ENCODE measurements at regions of chr17 and their contacts with region 1.

Region 1: DNA sequence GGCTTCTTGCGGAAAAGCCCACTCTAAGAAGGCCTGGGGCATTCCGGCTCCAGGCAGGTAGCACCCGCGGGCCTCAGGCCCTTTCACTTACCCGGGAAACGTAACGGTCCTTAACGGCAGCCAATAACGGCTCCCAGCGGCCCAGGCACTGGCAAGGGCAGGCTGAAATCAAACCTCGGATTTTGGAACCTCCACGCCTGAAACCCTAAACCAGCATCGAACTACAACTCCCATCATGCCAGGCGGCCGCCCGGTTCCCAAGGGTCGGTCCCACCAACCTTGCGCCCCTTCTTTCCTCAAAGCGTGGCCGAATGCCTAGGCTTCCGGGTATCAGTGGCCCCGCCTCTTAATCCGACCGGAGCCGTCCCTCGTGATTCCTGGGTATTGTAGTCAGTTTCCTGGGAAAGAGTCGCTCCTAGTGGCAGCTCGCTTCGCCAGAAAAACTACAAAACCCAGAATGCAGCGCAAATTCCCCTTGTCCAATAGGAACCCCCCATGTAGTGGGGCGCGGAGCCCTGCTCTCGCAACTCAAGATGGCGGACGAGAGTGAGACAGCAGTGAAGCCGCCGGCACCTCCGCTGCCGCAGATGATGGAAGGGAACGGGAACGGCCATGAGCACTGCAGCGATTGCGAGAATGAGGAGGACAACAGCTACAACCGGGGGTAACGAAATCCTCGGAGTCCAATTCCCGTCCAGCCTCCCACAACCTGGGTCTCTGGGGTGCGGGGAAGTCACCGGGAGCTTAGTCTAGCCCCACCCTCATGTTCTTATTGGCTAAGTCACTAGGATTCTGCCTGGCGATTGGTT is at the start of gene NMT1:
- DNase-seq: peak; percentile 88 to 99 (median 94)
- ATAC-seq: peak; percentile 90
- H3K4me3 ChIP-seq: peak within 1 kb of the TSS; percentile 84 to 88
- H3K4me3 Mint-ChIP-seq: peak within 1 kb of the TSS; percentile 97
- H3K27ac ChIP-seq: peak within 1 kb of the TSS; percentile 81 to 91
- H3K27ac Mint-ChIP-seq: peak within 1 kb of the TSS; percentile 99
- H3K4me1 ChIP-seq: peaks cover 32% of the 10 kb centered on the region
- H3K4me1 Mint-ChIP-seq: peaks cover 43% of the 10 kb centered on the region
- H3K27me3 ChIP-seq: no peaks in the 10 kb centered on the region
- H3K27me3 Mint-ChIP-seq: no peaks in the 10 kb centered on the region
- CTCF ChIP-seq: no peak
- total RNA-seq, gene NMT1: 62.6 to 66.6 TPM

Region 2: DNA sequence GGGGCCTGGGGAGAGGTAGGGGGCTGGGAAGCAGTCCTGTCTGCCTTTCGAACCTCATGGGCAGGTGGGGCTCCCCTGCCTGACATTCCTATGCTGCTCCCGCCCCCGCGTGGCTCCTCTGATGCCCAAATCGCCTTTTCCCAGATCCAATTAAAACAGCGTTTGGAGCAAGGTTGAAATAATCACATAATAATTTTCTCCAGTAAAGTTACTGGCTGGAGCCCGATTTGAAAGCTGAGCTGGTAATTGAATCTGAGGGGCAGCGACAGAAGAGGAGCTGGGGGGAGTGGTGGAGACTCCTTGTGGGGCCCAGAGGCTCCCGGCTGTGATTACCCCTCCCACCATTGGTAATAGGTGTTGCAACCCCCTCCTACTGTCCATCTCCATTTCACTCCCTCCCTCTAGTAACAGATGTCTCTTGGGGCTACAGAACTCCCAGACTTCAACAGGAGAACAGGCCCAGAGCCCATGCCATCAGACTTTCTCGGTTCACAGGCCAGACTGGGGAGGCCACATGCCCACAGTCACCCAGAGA is 54.0 kb before region 1 on chr17:
- CTCF ChIA-PET with region 1: no interaction called
- POLR2A ChIA-PET with region 1: no interaction called
- intact Hi-C with region 1: no loop called
- DNase-seq: no peak
- ATAC-seq: no peak
- H3K4me3 ChIP-seq: no peak overlapping the region
- H3K4me3 Mint-ChIP-seq: no peak overlapping the region
- H3K27ac ChIP-seq: no peak overlapping the region
- H3K27ac Mint-ChIP-seq: no peak overlapping the region
- H3K4me1 ChIP-seq: no peaks in the 10 kb centered on the region
- H3K4me1 Mint-ChIP-seq: no peaks in the 10 kb centered on the region
- H3K27me3 ChIP-seq: no peaks in the 10 kb centered on the region
- H3K27me3 Mint-ChIP-seq: peaks cover 6% of the 10 kb centered on the region
- CTCF ChIP-seq: no peak

Region 3: DNA sequence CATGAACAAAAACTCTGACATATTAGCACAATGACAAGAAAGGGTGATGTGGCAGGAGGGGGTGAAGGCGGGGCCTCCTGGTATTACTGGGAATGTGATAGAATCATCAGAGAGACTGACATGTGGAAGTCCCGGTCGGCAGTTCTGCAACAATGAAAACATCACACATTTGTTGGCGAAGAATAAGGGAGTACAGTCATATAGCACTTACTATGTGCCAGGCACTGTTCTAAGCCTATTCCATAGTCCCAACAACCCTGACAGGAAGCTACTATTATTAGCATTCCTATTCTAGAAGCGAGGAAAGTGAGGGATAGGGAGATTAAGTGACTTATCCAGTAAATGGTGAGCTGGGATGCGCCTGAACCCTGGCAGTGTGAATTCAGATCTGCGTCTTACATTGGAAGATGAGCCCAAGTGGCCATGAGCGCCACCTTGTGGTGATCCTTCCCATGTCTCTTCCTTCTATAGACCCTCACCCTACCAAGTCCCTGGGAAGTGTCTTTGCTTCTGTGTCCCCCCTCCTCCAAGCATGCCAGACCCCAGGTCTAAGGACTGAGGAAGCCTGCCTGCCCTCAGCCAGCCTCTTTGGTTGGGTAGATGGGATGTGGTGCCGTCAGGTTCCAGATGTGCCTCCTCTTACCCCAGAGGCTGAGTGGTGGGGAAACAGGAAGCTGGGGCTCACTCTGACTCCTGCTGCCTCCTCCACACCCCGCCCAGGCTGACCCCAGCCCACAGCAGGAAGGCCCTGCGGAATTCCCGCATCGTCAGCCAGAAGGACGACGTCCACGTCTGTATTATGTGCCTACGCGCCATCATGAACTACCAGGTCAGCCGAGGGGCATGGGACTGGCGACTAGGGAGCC is 174.6 kb after region 1 on chr17:
- CTCF ChIA-PET with region 1: no interaction called
- POLR2A ChIA-PET with region 1: no interaction called
- intact Hi-C with region 1: no loop called
- DNase-seq: peak; percentile 62 to 90 (median 83)
- ATAC-seq: peak; percentile 62
- H3K4me3 ChIP-seq: no peak overlapping the region
- H3K4me3 Mint-ChIP-seq: no peak overlapping the region
- H3K27ac ChIP-seq: peak overlapping the region in 1 of 2 experiments; percentile 60
- H3K27ac Mint-ChIP-seq: peak overlapping the region; percentile 66
- H3K4me1 ChIP-seq: peaks cover 45% of the 10 kb centered on the region
- H3K4me1 Mint-ChIP-seq: peaks cover 51% of the 10 kb centered on the region
- H3K27me3 ChIP-seq: no peaks in the 10 kb centered on the region
- H3K27me3 Mint-ChIP-seq: no peaks in the 10 kb centered on the region
- CTCF ChIP-seq: peak; percentile 71

Region 4: DNA sequence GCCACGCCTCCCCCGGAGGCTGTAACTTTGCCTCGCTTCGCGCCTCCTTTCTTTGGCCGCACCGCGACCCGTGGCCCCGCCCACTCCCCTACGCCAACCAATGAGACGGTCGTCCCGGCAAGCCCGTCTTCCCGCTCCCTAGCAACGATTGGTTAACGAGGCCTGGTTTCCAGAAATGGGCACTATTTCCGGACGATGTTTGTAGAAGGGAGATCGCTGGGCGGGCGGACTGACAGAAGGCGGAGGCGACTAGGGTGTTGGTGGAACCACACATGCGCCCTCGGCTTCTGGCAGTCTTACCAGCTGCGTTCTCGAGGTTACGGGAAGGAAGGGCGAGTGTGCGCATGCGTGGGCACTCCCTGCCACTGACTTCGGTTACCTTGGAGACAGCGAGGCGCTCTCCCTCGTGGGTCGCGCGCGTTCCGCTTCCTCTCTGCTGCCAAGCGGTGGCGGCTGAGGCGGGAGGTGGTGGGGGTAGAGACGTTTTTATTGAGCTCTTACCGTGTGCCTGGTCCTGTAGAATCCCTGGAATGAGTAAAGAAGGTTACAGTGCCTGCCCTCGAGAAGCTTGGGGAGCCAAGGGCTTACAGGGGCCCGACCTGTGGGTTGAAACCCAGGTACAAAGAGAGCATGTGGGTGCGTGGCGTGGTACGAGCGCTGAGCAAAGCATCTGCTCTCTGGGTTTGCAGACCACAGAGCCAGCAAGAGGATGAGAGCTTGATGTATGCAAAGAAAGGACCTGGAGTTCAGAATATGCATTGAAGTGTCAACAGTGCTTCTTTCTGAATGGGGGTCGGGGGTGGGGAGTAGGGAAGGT is 256.3 kb after region 1 on chr17:
- CTCF ChIA-PET with region 1: no interaction called
- POLR2A ChIA-PET with region 1: interaction called, 5 read pairs
- intact Hi-C with region 1: loop called in 1 of 2 experiments (anchors 5 kb)
- DNase-seq: peak; percentile 99 to 100 (median 100)
- ATAC-seq: peak; percentile 81
- H3K4me3 ChIP-seq: peak overlapping the region; percentile 55 to 81
- H3K4me3 Mint-ChIP-seq: peak overlapping the region; percentile 95
- H3K27ac ChIP-seq: peak overlapping the region; percentile 75 to 81
- H3K27ac Mint-ChIP-seq: peak overlapping the region; percentile 94
- H3K4me1 ChIP-seq: peaks cover 78% of the 10 kb centered on the region
- H3K4me1 Mint-ChIP-seq: peaks cover 80% of the 10 kb centered on the region
- H3K27me3 ChIP-seq: no peaks in the 10 kb centered on the region
- H3K27me3 Mint-ChIP-seq: no peaks in the 10 kb centered on the region
- CTCF ChIP-seq: no peak